Brain microvascular endothelial cell (primary cell): ENCODE measurements at regions of chr16 and their contacts with region 1.

Region 1: GRCh38 chr16:997440-998051 is 16.0 kb downstream of the SOX8 start:
- DNase-seq: no peak
- H3K4me3 ChIP-seq: no peak overlapping the region
- H3K27ac ChIP-seq: no peak overlapping the region
- H3K27me3 ChIP-seq: peaks cover 34% of the 10 kb centered on the region
- CTCF ChIP-seq: no peak

Region 2: DNA sequence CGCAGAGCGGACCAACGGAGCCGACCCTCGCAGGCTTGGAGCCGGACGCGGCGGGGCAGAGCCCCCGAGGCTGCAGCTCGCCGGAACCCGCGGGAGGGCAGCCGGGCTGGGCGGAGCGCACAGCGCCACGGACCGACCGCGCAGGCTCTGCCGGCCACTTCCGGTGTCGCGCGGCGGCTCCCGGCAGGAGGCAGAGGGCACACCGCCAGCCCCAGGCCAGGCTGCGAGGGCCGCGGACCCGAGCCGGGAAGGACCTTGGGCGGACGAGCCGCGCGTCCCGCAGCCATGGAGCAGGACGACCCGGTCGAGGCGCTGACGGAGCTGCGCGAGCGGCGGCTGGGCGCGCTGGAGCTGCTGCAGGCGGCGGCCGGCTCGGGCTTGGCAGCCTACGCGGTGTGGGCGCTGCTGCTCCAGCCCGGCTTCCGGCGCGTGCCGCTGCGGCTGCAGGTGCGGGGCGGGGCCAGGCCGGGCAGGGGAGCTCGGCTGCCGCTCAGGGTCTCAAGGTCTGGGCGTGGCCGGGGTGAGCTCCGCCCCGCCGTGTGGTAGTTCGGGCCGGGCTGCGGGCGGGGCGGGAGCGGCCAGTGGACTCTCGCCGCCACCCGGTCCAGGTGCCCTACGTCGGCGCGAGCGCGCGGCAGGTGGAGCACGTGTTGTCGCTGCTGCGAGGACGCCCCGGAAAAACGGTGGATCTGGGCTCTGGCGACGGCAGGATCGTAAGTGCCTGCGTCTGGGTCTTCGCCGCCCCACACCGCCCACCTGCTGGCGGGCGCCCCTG is 276.4 kb before region 1 on chr16 and contains the start of gene ANTKMT:
- in situ Hi-C with region 1: loop called (anchors 25 kb)
- DNase-seq: peak; percentile 28
- H3K4me3 ChIP-seq: peak within 1 kb of the TSS; percentile 65
- H3K27ac ChIP-seq: peak within 1 kb of the TSS; percentile 63
- H3K27me3 ChIP-seq: no peaks in the 10 kb centered on the region
- CTCF ChIP-seq: no peak

Region 3: GRCh38 chr16:842061-842476 is 155.5 kb before region 1 on chr16:
- in situ Hi-C with region 1: loop called (anchors 25 kb)
- DNase-seq: peak; percentile 35
- H3K4me3 ChIP-seq: no peak overlapping the region
- H3K27ac ChIP-seq: no peak overlapping the region
- H3K27me3 ChIP-seq: no peaks in the 10 kb centered on the region
- CTCF ChIP-seq: no peak